ENCODE measurements at regions of chr3 and their contacts with region 1.

Region 1: GRCh38 chr3:196568246-196569002 is at the starts of genes FBXO45 and WDR53:
- DNase-seq: peak; percentile 88 to 98 (median 95)
- ATAC-seq: peak; percentile 92
- H3K4me3 ChIP-seq: peak within 1 kb of the TSS; percentile 80
- H3K4me3 Mint-ChIP-seq: peak within 1 kb of the TSS; percentile 99
- H3K27ac ChIP-seq: peak within 1 kb of the TSS; percentile 86 to 91
- H3K27ac Mint-ChIP-seq: peak within 1 kb of the TSS; percentile 98
- H3K4me1 ChIP-seq: peaks cover 26% of the 10 kb centered on the region
- H3K4me1 Mint-ChIP-seq: peaks cover 43% of the 10 kb centered on the region
- H3K27me3 ChIP-seq: no peaks in the 10 kb centered on the region
- H3K27me3 Mint-ChIP-seq: no peaks in the 10 kb centered on the region
- CTCF ChIP-seq: no peak
- total RNA-seq, gene FBXO45: 7.8 to 9.3 TPM
- total RNA-seq, gene WDR53: 15.7 to 17.5 TPM

Region 2: DNA sequence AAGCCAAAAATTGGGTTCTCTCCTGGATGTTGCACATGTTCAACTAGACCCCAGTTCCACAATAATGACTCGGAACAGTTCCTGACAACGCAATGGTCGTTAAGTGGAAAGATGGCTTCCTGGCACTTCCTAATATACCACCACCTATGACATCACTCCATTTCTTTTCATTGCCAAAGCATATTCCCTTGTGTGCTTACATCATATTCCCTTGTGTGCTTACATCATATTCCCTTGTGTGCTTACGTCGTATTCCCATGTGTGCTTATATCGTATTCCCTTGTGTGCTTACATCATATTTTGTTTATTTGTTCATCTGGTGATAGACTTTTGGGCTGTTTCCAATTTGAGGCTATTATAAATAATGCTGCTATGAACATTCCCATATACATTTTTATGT is 525.8 kb before region 1 on chr3:
- CTCF ChIA-PET with region 1: no interaction called
- POLR2A ChIA-PET with region 1: no interaction called
- intact Hi-C with region 1: no loop called
- DNase-seq: no peak
- ATAC-seq: no peak
- H3K4me3 ChIP-seq: no peak overlapping the region
- H3K4me3 Mint-ChIP-seq: no peak overlapping the region
- H3K27ac ChIP-seq: no peak overlapping the region
- H3K27ac Mint-ChIP-seq: no peak overlapping the region
- H3K4me1 ChIP-seq: no peaks in the 10 kb centered on the region
- H3K4me1 Mint-ChIP-seq: no peaks in the 10 kb centered on the region
- H3K27me3 ChIP-seq: no peaks in the 10 kb centered on the region
- H3K27me3 Mint-ChIP-seq: no peaks in the 10 kb centered on the region
- CTCF ChIP-seq: no peak

Region 3: DNA sequence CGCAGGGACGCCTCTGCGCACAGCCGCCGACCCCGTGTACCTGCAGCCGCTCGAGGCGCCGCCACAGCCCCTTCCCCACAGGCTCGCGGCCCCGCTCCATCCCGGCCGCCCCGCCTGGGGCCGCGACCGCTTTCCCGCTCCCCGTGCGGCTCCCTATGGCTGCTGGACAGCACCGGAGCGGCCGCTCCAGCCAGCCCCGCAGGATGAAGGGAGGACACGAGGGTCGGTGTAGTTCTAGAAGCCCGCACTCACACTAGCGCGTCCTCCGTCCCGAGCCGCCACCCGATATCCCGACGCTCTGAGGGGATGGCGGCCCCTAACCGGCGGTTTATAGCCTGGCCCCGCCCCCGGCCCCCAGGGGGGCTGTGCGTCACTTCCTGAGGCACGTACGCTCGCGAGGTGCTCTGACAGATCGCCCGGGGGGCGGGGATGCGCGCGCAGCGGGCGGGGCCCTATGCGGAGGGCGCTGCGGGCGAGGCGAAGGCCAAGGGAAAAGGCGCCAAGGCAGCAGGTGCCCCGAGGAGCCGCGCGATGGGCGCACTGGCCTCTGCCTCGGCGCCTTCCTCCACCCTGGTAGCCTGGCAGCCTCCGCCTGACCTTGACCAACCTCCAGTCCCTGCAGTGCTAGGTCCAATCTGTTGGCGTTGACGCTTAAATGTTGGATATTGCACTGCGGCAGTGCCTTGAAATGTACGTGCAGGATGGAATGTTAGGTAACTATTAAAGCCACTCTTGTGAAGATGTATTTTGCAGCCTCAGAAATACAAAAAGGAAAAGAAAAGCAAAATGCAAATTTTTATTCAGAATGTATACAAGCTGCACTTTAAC is 486.4 kb before region 1 on chr3 and contains the start of gene TFRC:
- CTCF ChIA-PET with region 1: no interaction called
- POLR2A ChIA-PET with region 1: no interaction called
- intact Hi-C with region 1: loop called in 1 of 2 experiments (anchors 5 kb)
- DNase-seq: peak; percentile 86 to 98 (median 95)
- ATAC-seq: peak; percentile 90
- H3K4me3 ChIP-seq: peak within 1 kb of the TSS; percentile 84 to 98
- H3K4me3 Mint-ChIP-seq: peak within 1 kb of the TSS; percentile 97
- H3K27ac ChIP-seq: peak within 1 kb of the TSS; percentile 88 to 99
- H3K27ac Mint-ChIP-seq: peak within 1 kb of the TSS; percentile 94
- H3K4me1 ChIP-seq: peaks cover 33% of the 10 kb centered on the region
- H3K4me1 Mint-ChIP-seq: peaks cover 36% of the 10 kb centered on the region
- H3K27me3 ChIP-seq: no peaks in the 10 kb centered on the region
- H3K27me3 Mint-ChIP-seq: no peaks in the 10 kb centered on the region
- CTCF ChIP-seq: no peak
- total RNA-seq, gene TFRC: 208 to 218 TPM

Region 4: DNA sequence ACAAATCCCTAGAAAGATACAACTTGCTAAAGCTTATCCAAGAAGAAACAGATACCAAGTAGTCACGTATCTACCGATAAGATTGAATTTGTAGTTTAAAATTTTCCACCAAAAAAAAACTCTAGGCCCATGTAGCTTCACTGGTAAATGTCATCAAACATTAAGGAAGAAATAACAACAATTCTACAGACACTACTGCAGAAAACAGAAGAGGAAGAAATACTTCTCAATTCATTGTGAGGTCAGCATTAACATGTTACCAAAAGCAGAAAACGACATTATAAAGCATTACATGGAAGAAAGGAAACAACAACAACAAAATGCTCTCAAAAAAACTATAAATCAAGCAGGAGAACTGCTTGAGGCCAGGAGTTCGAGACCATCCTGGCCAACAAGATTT is 202.7 kb before region 1 on chr3:
- CTCF ChIA-PET with region 1: no interaction called
- POLR2A ChIA-PET with region 1: no interaction called
- intact Hi-C with region 1: no loop called
- DNase-seq: no peak
- ATAC-seq: no peak
- H3K4me3 ChIP-seq: no peak overlapping the region
- H3K4me3 Mint-ChIP-seq: no peak overlapping the region
- H3K27ac ChIP-seq: no peak overlapping the region
- H3K27ac Mint-ChIP-seq: no peak overlapping the region
- H3K4me1 ChIP-seq: no peaks in the 10 kb centered on the region
- H3K4me1 Mint-ChIP-seq: no peaks in the 10 kb centered on the region
- H3K27me3 ChIP-seq: no peaks in the 10 kb centered on the region
- H3K27me3 Mint-ChIP-seq: no peaks in the 10 kb centered on the region
- CTCF ChIP-seq: no peak

Region 5: DNA sequence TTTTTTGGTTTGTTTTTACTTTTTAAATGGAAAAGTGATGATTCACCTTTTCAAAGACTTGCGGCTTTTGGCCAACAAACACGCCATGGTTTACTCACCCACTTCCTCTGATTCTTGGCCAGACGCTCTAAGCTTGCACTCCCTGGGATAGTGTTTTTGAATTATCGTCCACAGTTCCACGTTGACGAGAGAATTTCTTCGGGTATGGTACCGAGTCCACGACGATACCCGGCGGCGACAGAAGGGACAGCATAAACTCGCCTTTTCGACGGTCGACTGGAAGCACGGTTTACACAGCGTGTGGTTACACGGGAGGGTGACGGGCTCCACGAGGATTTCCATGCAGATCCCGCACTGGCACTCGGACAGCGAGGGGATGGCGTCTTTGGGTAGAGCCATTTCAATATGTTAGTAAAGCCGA is 65.6 kb before region 1 on chr3:
- CTCF ChIA-PET with region 1: no interaction called
- POLR2A ChIA-PET with region 1: interaction called, 12 read pairs
- intact Hi-C with region 1: loop called (anchors 1 kb)
- DNase-seq: peak in 8 of 9 experiments; percentile 42 to 86 (median 68)
- ATAC-seq: peak; percentile 60
- H3K4me3 ChIP-seq: peak overlapping the region; percentile 65 to 76
- H3K4me3 Mint-ChIP-seq: peak overlapping the region; percentile 96
- H3K27ac ChIP-seq: peak overlapping the region; percentile 78 to 81
- H3K27ac Mint-ChIP-seq: peak overlapping the region; percentile 95
- H3K4me1 ChIP-seq: peaks cover 13% of the 10 kb centered on the region
- H3K4me1 Mint-ChIP-seq: peaks cover 34% of the 10 kb centered on the region
- H3K27me3 ChIP-seq: no peaks in the 10 kb centered on the region
- H3K27me3 Mint-ChIP-seq: no peaks in the 10 kb centered on the region
- CTCF ChIP-seq: no peak

Region 6: DNA sequence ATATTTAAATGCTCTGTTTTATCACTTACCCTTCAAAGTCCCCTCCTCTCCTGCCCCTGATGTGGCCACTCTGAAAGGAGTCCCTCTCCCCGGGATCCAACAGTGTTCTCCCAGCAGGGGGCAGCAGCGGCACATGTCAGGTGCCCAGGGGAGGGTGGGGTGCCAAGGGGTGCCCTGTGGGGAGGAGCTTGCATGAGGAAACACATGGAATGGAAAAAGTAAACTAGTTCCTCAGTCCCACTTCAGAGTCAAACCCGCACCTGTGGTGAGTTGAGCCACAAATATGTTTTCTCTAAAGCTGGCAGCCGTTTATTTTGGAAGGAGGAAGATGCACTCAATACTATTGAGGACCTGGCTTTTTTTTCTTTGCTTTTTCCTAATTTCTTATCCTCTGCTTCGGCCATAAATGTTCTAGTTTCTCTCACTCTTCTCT is 40.9 kb after region 1 on chr3:
- CTCF ChIA-PET with region 1: interaction called, 10 read pairs
- POLR2A ChIA-PET with region 1: interaction called, 3 read pairs
- intact Hi-C with region 1: loop called in 1 of 2 experiments (anchors 2 kb)
- DNase-seq: peak; percentile 85 to 99 (median 93)
- ATAC-seq: peak; percentile 81
- H3K4me3 ChIP-seq: no peak overlapping the region
- H3K4me3 Mint-ChIP-seq: peak overlapping the region; percentile 62
- H3K27ac ChIP-seq: peak overlapping the region in 1 of 2 experiments; percentile 14
- H3K27ac Mint-ChIP-seq: peak overlapping the region; percentile 81
- H3K4me1 ChIP-seq: peaks cover 27% of the 10 kb centered on the region
- H3K4me1 Mint-ChIP-seq: peaks cover 40% of the 10 kb centered on the region
- H3K27me3 ChIP-seq: no peaks in the 10 kb centered on the region
- H3K27me3 Mint-ChIP-seq: no peaks in the 10 kb centered on the region
- CTCF ChIP-seq: peak; percentile 93

Region 7: DNA sequence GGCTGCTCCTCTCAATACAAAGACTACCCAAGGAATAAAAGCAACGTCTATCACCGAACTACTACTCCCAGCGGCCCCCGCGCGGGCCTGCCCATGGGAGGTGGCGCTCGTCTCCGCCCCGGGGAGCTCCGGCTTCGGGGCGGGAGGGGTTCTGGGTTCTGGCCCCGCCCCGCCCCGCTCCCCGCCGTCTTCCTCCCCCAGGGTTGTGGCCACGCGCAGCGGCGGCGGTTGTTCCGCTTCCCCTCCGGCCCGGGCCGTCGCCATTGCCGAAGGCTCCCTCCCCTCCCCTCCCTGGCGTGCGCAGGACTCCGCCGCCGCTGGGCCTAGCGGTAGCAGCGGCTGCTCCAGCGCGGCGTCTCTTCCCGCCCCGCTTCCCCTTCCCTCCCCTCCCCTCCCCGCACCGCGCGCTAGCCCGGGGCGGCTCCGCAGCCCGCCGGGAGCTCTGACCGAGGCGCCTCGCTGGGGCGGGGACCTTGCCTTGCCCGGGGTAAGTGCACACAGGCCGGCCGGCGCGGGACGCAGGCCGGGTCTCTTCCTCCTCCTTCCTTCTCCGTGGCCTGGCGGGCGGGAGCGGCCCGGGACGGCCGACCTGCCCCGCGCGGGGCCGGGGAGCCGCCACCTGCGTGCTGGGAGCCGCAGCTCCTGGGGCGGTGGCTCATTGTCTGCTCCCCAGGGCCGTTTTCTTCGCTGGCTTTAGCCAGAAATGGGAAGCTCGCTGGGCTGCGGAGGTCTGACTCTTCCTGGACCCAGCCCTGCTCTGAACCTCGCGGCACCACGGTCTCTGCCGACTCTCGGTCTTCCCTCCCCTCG is 171.5 kb after region 1 on chr3 and contains the start of gene PAK2:
- CTCF ChIA-PET with region 1: no interaction called
- POLR2A ChIA-PET with region 1: interaction called, 3 read pairs
- intact Hi-C with region 1: loop called (anchors 1 kb)
- DNase-seq: peak; percentile 78 to 95 (median 90)
- ATAC-seq: peak; percentile 84
- H3K4me3 ChIP-seq: peak within 1 kb of the TSS; percentile 69 to 77
- H3K4me3 Mint-ChIP-seq: peak within 1 kb of the TSS; percentile 99
- H3K27ac ChIP-seq: peak within 1 kb of the TSS; percentile 82 to 88
- H3K27ac Mint-ChIP-seq: peak within 1 kb of the TSS; percentile 98
- H3K4me1 ChIP-seq: peaks cover 27% of the 10 kb centered on the region
- H3K4me1 Mint-ChIP-seq: peaks cover 33% of the 10 kb centered on the region
- H3K27me3 ChIP-seq: no peaks in the 10 kb centered on the region
- H3K27me3 Mint-ChIP-seq: no peaks in the 10 kb centered on the region
- CTCF ChIP-seq: no peak
- total RNA-seq, gene PAK2: 29.9 to 30.4 TPM

Region 8: DNA sequence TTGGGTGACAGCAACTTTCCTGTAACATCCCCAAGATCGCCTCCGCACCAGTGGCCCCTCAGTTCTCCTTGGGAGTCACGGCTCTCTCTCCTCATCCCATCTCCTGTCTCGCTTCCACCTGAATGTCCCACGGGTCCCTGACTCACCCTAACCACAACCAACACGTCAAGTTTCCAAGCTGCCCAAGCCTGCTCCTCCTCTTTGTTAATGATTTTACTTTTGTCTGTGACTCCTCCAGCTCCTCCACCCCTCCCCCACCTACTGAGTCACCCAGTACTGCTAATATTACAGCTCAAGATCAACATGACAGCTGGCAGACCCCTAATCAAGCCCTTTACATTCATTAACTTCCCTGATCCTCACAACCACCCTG is 948.1 kb after region 1 on chr3:
- CTCF ChIA-PET with region 1: no interaction called
- POLR2A ChIA-PET with region 1: no interaction called
- intact Hi-C with region 1: loop called in 1 of 2 experiments (anchors 10 kb)
- DNase-seq: peak in 1 of 9 experiments; percentile 39
- ATAC-seq: peak; percentile 45
- H3K4me3 ChIP-seq: no peak overlapping the region
- H3K4me3 Mint-ChIP-seq: no peak overlapping the region
- H3K27ac ChIP-seq: peak overlapping the region; percentile 53 to 75
- H3K27ac Mint-ChIP-seq: peak overlapping the region; percentile 42
- H3K4me1 ChIP-seq: peaks cover 9% of the 10 kb centered on the region
- H3K4me1 Mint-ChIP-seq: peaks cover 9% of the 10 kb centered on the region
- H3K27me3 ChIP-seq: no peaks in the 10 kb centered on the region
- H3K27me3 Mint-ChIP-seq: no peaks in the 10 kb centered on the region
- CTCF ChIP-seq: no peak

Measured in CD8-positive, alpha-beta T cell (primary cell).